ENCODE measurements at regions of chr5 and their contacts with region 1.

Region 1: DNA sequence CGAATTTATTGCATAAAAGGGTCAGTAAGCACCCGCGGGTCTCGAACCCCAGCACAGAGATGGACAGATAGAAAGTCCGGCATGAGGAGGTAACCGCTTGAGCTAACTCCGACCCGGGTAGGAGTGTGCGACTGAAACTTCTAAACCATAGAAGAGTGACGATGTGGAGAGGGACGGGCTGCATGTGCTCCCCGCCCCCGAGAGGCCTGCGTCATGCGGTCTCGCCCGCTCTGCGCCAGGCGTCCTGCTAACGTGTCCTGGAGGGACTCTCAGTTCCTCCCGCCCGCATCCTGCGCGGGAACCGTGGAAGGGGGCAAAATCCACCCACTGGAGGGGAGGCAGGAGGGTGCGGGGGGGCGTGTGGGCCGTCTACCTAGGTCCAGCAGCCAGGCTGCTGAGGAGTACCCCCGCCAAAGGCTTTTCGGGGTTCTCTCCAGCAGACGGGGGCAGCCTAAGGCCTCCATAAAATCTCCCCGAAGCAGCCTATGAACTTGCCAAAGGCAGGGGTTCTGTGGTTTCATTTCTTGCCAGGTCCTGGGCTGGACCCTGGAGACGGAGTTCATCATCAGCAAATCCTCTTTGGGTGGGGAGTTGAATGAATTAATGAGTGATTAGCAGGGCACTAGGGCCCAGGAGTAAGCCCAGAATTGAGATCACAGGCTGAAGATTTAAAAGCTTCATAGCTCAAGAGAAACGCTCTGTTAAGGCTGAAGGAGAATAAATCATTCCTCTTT is 51.9 kb downstream of the TGFBI start:
- DNase-seq: peak; percentile 95
- ATAC-seq: peak; percentile 96

Region 2: GRCh38 chr5:136028782-136029742 is 51.6 kb before region 1 on chr5 and contains the start of gene TGFBI:
- intact Hi-C with region 1: loop called (anchors 5 kb)
- DNase-seq: peak; percentile 91
- ATAC-seq: peak; percentile 88
- total RNA-seq, gene TGFBI: 66.5 TPM

Region 3: GRCh38 chr5:136042665-136043121 is 38.0 kb before region 1 on chr5:
- intact Hi-C with region 1: no loop called
- DNase-seq: no peak
- ATAC-seq: no peak